ENCODE measurements at regions of chr5 and their contacts with region 1.

Region 1: GRCh38 chr5:38831909-38832308 is 13.9 kb upstream of the OSMR start:
- DNase-seq: no peak
- ATAC-seq: peak; percentile 74
- H3K4me3 ChIP-seq: no peak overlapping the region
- H3K27ac ChIP-seq: no peak overlapping the region
- H3K4me1 ChIP-seq: peaks cover 0 to 4% of the 10 kb centered on the region in 2 donors
- H3K27me3 ChIP-seq: no peaks in the 10 kb centered on the region

Region 2: GRCh38 chr5:38758774-38759600 is 72.9 kb before region 1 on chr5:
- intact Hi-C with region 1: no loop called
- DNase-seq: no peak
- ATAC-seq: no peak
- H3K4me3 ChIP-seq: no peak overlapping the region
- H3K27ac ChIP-seq: no peak overlapping the region
- H3K4me1 ChIP-seq: no peaks in the 10 kb centered on the region
- H3K27me3 ChIP-seq: no peaks in the 10 kb centered on the region

Region 3: DNA sequence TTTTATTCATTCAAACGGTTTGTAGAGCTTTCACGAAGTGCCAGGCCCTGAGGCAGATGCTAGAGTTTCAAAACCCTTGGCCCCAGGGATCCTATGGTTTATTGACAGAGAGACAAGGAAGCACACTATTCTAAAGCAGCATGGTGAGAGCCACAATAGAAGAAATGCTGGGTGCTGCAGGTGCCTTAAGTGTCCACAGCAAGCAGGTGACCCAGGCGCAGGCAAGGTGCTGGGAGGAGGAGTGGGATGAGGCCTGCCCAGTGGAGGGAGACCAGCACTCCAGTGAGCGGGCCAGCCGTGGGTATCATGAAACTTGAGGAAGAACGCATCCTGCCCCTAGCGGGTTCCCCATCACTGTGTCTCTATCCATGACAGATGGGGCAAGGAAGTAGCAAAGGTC is 84.9 kb after region 1 on chr5:
- intact Hi-C with region 1: loop called (anchors 5 kb)
- DNase-seq: no peak
- ATAC-seq: no peak
- H3K4me3 ChIP-seq: no peak overlapping the region
- H3K27ac ChIP-seq: no peak overlapping the region
- H3K4me1 ChIP-seq: no peaks in the 10 kb centered on the region
- H3K27me3 ChIP-seq: no peaks in the 10 kb centered on the region

Region 4: GRCh38 chr5:38922199-38922598 is 90.3 kb after region 1 on chr5:
- intact Hi-C with region 1: loop called (anchors 5 kb)
- DNase-seq: no peak
- ATAC-seq: peak; percentile 65
- H3K4me3 ChIP-seq: no peak overlapping the region
- H3K27ac ChIP-seq: no peak overlapping the region
- H3K4me1 ChIP-seq: peaks cover 4 to 7% of the 10 kb centered on the region in 2 donors
- H3K27me3 ChIP-seq: no peaks in the 10 kb centered on the region

Region 5: GRCh38 chr5:38938424-38938823 is 106.5 kb after region 1 on chr5:
- intact Hi-C with region 1: no loop called
- DNase-seq: no peak
- ATAC-seq: no peak
- H3K4me3 ChIP-seq: no peak overlapping the region
- H3K27ac ChIP-seq: no peak overlapping the region
- H3K4me1 ChIP-seq: no peaks in the 10 kb centered on the region
- H3K27me3 ChIP-seq: no peaks in the 10 kb centered on the region

Region 6: DNA sequence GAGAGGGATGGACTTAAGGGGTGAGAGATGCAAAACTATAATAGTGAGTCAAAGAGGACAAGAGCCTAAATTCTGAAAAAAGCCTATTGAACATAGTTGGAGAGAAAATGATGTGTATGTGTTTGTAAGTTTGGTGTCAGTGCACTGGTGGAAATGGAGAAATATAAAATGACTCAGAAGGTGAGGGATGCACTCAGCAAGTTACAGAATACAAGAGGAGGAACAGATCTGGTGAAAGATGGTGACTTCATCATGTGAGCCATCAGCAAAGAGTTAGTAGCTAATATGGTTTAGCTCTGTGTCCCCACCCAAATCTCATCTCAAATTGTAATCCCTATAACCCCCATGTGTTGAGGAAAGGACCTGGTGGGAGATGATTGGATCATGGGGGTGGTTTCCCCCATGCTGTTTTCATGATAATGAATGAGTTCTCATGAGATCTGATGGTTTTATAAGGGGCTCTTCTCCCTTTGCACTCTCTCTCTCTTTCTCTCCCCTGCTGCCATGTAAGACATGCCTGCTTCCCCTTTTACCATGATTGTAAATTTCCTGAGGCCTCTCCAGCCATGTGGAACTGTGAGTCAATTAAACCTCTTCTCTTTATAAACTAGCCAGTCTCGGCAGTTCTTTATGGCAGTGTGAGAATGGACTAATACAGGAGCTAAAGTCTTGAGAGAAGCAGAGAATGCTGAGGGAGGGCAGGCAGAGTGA is 417.8 kb after region 1 on chr5:
- intact Hi-C with region 1: no loop called
- DNase-seq: no peak
- ATAC-seq: no peak
- H3K4me3 ChIP-seq: no peak overlapping the region
- H3K27ac ChIP-seq: no peak overlapping the region
- H3K4me1 ChIP-seq: no peaks in the 10 kb centered on the region
- H3K27me3 ChIP-seq: peaks cover 0 to 2% of the 10 kb centered on the region in 2 donors